HepG2 (cell line): ENCODE measurements at regions of chr18 and their contacts with region 1.

Region 1: GRCh38 chr18:80258640-80259039 is 11.3 kb upstream of the PARD6G start:
- DNase-seq: no peak
- ATAC-seq: no peak
- H3K4me3 ChIP-seq: no peak overlapping the region
- H3K27ac ChIP-seq: no peak overlapping the region
- H3K4me1 ChIP-seq: no peaks in the 10 kb centered on the region
- H3K27me3 ChIP-seq: no peaks in the 10 kb centered on the region; a peak in 2 of 5 replicates
- CTCF ChIP-seq: no peak
- EP300 ChIP-seq: no peak
- POLR2A ChIP-seq: no peak
- RAD21 ChIP-seq: no peak

Region 2: DNA sequence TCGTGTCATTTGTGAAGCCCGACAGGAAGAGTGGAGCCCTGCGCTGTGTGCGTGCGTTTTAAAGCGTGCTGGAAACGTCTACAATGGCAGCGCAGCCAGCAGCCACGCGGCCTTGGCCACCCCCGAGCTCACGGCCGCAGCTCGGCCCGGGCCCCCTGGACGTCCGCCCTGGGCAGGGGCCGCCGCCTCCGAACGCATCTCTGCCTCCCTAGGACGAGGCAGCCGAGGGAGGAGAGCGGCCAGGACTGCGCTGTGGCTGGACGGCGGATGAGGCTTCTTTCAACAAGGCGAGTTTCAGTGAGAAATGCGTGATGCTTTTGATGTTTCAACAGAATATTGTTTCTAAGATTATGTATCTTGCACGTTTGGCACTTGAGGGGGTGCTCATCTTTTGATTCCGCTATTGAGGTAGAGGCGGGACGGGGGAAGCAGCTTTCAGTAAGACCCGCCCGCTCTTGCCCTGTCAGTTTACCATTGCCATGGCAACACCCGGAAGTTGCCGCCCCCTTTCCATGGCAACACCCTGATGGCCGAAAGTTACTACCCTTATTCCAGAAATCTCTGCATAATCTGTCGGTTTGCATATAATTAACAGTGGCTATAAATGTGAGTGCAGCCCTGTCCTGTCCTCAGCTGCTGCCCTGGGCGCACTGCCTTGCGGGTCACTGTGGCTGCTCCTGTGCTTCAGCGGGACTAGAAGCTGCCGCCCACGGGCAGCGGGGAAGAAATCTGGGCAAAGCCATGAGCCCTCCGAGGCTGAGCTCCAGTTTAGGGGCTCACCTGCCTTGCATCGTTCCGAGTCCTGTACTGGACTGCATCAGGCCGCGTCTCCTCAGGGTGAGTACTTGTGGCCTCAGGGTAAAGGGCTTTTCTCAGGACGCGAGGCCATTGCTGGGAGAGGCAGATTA is 111.0 kb before region 1 on chr18:
- CTCF ChIA-PET with region 1: no interaction called
- POLR2A ChIA-PET with region 1: no interaction called
- in situ Hi-C with region 1: no loop called
- intact Hi-C with region 1: no loop called
- DNase-seq: peak; percentile 77
- ATAC-seq: peak; percentile 82
- H3K4me3 ChIP-seq: peak overlapping the region; percentile 65 to 72 (median 68)
- H3K27ac ChIP-seq: peak overlapping the region; percentile 2
- H3K4me1 ChIP-seq: peaks cover 39% of the 10 kb centered on the region
- H3K27me3 ChIP-seq: no peaks in the 10 kb centered on the region
- CTCF ChIP-seq: no peak
- EP300 ChIP-seq: no peak
- POLR2A ChIP-seq: peak; percentile 76 to 93
- RAD21 ChIP-seq: no peak

Region 3: DNA sequence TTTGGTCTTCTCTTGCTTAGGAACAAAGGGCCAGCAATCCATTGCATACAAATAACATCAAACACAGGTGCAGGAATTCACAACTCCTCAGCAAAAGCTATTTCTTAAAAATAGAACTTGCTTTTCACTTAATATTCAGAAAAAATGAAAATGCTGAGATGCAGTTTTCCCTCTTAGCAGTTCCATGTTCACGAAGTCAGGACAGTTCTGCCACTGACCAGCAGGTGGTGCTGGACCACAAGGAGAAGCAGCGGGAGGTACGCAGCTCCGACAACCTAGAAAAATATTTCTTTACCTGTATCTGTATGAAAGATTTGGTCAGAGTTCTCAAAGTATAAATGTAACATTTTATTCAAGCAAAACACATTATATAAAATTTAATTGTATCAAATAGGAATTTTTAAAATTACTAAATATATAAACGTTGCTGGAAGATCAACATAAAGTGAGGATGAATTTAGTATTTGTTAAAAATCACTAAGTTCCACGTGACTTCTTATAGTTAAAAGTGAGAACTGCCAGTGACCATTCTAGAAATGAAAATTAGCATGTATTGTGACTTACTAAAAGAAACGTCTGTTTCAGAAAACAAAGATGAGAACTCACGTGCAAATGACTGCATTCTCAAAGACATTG is 100.8 kb before region 1 on chr18:
- CTCF ChIA-PET with region 1: interaction called, 20 read pairs
- POLR2A ChIA-PET with region 1: no interaction called
- in situ Hi-C with region 1: no loop called
- intact Hi-C with region 1: no loop called
- DNase-seq: peak; percentile 57
- ATAC-seq: peak; percentile 61
- H3K4me3 ChIP-seq: no peak overlapping the region
- H3K27ac ChIP-seq: no peak overlapping the region
- H3K4me1 ChIP-seq: no peaks in the 10 kb centered on the region
- H3K27me3 ChIP-seq: no peaks in the 10 kb centered on the region
- CTCF ChIP-seq: peak; percentile 86
- EP300 ChIP-seq: no peak
- POLR2A ChIP-seq: no peak
- RAD21 ChIP-seq: peak; percentile 49

Region 4: GRCh38 chr18:80171054-80171872 is 87.4 kb before region 1 on chr18:
- CTCF ChIA-PET with region 1: interaction called, 26 read pairs
- POLR2A ChIA-PET with region 1: no interaction called
- in situ Hi-C with region 1: no loop called
- intact Hi-C with region 1: no loop called
- DNase-seq: no peak
- ATAC-seq: peak; percentile 58
- H3K4me3 ChIP-seq: no peak overlapping the region
- H3K27ac ChIP-seq: no peak overlapping the region
- H3K4me1 ChIP-seq: no peaks in the 10 kb centered on the region
- H3K27me3 ChIP-seq: no peaks in the 10 kb centered on the region
- CTCF ChIP-seq: peak; percentile 77
- EP300 ChIP-seq: no peak
- POLR2A ChIP-seq: no peak
- RAD21 ChIP-seq: peak; percentile 57